ENCODE measurements at regions of chr5 and their contacts with region 1.

Region 1: GRCh38 chr5:157890836-157891597 is 32.1 kb upstream of the CLINT1 start:
- DNase-seq: no peak

Region 2: GRCh38 chr5:156456857-156457256 is 1434.2 kb before region 1 on chr5:
- intact Hi-C with region 1: loop called in 1 of 2 experiments (anchors 10 kb)
- DNase-seq: no peak

Region 3: DNA sequence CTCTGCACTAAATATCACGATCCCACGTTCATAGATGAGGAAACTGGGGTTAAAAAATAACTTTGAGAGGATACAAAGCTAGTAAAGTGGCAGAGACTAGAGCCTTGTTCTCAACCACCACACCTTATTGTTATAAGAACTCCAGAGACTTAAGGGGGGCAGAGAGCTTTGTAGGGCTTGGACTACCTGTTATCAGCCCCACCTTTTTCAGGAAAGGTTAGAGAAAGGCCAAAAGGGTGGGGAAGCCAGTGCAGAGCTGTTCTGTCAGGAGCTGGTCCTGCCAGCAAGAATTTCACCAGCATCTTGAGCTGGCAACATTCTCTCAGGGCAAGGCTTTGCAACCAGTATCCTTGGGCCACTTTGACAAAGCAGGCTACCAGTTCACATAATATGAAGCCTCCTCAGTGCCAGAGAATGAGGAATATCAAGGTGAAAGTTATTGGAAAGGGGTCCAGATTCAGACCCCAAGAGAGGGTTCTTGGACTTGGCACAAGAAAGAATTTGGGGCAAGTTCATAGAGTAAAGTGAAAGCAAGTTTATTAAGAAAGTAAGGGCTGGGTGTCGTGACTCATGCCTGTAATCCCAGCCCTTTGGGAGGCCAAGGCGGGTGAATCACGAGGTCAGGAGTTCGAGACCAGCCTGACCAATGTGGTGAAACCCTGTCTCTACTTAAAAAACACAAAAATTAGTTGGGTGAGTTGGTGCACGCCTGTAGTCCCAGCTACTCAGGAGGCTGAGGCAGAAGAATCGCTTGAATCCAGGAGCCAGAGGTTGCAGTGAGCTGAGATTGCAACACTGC is 34.1 kb after region 1 on chr5:
- intact Hi-C with region 1: loop called in 1 of 2 experiments (anchors 1 kb)
- DNase-seq: no peak

Region 4: DNA sequence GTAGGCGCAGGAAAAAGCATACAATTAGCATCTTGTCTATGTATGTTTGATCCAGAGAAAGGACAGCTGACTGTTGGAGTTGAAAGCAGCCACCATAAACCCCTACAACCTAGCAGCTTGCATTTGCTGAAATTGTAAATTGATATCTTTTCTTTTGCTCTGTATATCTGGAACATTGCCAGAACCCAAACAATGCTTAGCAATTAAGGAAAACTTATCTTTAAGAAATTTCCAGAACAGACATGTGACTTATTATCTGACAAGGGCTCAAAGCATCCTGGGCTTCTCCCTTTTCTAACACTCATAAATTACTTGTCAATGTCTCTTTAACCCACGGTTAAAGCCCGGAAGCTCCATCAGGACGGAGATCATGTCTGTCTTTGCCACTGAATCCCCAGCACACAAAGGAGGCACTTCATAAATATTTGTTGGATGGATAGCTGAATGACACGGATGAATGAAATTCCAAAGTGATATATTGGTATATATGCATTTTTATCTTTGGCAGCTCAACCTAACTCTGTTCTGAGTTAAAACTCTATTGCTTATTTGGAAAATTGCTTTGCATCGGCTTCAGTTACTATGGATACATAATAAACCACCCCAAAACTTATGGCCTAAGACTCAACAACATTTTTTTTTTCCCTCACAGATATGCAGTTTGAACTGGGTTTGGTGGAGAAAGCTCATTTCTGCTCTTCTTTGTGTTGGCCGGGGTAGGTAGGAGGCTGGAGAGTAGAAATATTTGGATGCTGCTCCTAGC is 71.0 kb after region 1 on chr5:
- intact Hi-C with region 1: no loop called
- DNase-seq: no peak